Astrocyte of the cerebellum (primary cell): ENCODE measurements at regions of chr20 and their contacts with region 1.

Region 1: GRCh38 chr20:2416541-2417212 is 36.0 kb downstream of the TGM6 start:
- DNase-seq: no peak
- H3K4me3 ChIP-seq: no peak overlapping the region
- CTCF ChIP-seq: no peak

Region 2: DNA sequence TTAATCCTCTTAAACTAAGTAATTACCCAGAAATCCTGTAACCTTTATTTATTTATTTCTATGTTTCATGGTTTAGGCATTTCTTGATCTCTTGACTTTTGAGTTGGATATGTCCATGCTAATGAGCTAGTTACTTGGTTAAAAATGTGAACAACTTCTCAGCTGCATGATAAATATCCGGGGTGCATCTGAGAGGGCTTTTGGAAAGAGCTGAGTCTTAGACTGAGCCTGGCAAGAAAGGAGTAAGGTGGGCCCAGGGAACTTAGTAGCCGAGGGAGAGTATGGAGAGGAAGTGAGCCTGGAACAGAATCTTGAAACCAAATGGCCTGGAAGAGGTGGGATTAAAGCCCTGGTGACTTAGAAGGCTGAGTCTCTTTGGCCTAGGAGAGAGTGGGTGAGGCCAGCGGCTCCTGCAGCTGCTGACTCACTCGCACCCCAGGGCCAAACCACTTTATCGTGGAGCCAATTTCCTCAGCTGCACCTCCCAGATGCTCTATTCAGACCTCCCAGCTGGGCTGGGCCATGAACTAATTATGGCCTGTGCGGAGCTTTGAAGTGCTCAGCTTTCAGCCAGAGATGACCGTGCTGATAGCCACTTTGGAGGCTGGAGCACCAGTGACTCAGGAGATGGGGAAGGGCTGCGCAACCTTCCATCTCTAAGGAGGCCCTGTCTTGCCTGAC is 101.8 kb before region 1 on chr20:
- in situ Hi-C with region 1: loop called (anchors 5 kb)
- DNase-seq: peak; percentile 57
- H3K4me3 ChIP-seq: no peak overlapping the region
- CTCF ChIP-seq: no peak

Region 3: DNA sequence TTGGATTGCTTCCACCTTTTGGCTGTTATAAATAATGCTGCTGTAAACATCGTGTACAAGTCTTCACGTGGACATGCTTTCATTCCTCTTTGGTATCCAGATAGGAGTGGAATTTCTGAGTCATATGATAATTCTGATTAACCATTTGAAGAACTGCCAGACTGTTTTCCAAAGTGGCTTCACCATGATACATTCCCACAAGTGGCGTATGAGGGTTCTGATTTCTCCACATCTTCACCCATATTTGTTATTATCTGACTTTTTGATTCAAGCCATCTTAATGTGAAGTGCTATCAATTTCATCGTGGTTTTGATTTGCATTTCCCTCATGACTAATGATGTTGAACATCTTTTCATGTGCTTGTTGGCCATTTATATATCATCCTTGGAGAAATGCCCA is 56.8 kb after region 1 on chr20:
- in situ Hi-C with region 1: no loop called
- DNase-seq: peak; percentile 38
- H3K4me3 ChIP-seq: no peak overlapping the region
- CTCF ChIP-seq: no peak